ENCODE measurements at regions of chr6 and their contacts with region 1.

Region 1: GRCh38 chr6:33014841-33015634 is 5.6 kb upstream of the HLA-DOA start:
- DNase-seq: peak in 1 of 2 donors; percentile 90
- ATAC-seq: peak; percentile 77 to 85 (median 79)
- H3K4me3 ChIP-seq: no peak overlapping the region
- H3K4me3 Mint-ChIP-seq: no peak overlapping the region
- H3K27ac ChIP-seq: no peak overlapping the region
- H3K27ac Mint-ChIP-seq: no peak overlapping the region
- H3K4me1 ChIP-seq: peaks cover 20% of the 10 kb centered on the region
- H3K4me1 Mint-ChIP-seq: peaks cover 5 to 28% of the 10 kb centered on the region in 2 donors
- H3K27me3 ChIP-seq: no peaks in the 10 kb centered on the region
- H3K27me3 Mint-ChIP-seq: peaks cover 15 to 30% of the 10 kb centered on the region in 2 donors
- CTCF ChIP-seq: peak; percentile 80

Region 2: GRCh38 chr6:32984605-32985389 is 30.2 kb before region 1 on chr6:
- intact Hi-C with region 1: no loop called
- DNase-seq: peak; percentile 85 to 95
- ATAC-seq: peak; percentile 82 to 91 (median 91)
- H3K4me3 ChIP-seq: no peak overlapping the region
- H3K4me3 Mint-ChIP-seq: no peak overlapping the region
- H3K27ac ChIP-seq: no peak overlapping the region
- H3K27ac Mint-ChIP-seq: peak overlapping the region in 1 of 2 donors; percentile 97
- H3K4me1 ChIP-seq: peaks cover 7% of the 10 kb centered on the region
- H3K4me1 Mint-ChIP-seq: peaks cover 20 to 32% of the 10 kb centered on the region in 2 donors
- H3K27me3 ChIP-seq: no peaks in the 10 kb centered on the region
- H3K27me3 Mint-ChIP-seq: no peaks in the 10 kb centered on the region
- CTCF ChIP-seq: peak; percentile 87

Region 3: DNA sequence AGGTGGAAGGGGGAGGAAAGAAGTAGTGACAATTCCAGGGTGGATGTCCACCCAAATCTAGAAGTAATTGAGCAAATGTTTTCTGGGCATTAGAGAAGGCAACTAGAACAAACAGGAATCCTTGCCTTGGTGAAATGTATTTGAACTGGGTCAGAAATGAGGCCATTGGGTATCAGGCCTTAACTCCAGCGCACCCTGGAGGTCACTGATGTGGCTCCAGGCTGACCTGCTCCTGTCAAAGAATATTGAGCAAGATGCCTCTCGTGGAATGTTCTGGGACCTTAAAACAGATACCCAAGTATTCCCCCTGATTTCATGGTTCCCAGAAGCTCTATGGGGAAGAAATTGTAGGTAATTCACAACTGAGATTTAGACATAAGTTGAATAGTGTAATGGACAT is 67.7 kb after region 1 on chr6:
- intact Hi-C with region 1: loop called (anchors 1 kb)
- DNase-seq: peak in 1 of 2 donors; percentile 35
- ATAC-seq: peak; percentile 52 to 75 (median 75)
- H3K4me3 ChIP-seq: no peak overlapping the region
- H3K4me3 Mint-ChIP-seq: no peak overlapping the region
- H3K27ac ChIP-seq: no peak overlapping the region
- H3K27ac Mint-ChIP-seq: no peak overlapping the region
- H3K4me1 ChIP-seq: peaks cover 31% of the 10 kb centered on the region
- H3K4me1 Mint-ChIP-seq: peaks cover 28 to 43% of the 10 kb centered on the region in 2 donors
- H3K27me3 ChIP-seq: no peaks in the 10 kb centered on the region
- H3K27me3 Mint-ChIP-seq: peaks cover 0 to 8% of the 10 kb centered on the region in 2 donors
- CTCF ChIP-seq: peak; percentile 49

Region 4: DNA sequence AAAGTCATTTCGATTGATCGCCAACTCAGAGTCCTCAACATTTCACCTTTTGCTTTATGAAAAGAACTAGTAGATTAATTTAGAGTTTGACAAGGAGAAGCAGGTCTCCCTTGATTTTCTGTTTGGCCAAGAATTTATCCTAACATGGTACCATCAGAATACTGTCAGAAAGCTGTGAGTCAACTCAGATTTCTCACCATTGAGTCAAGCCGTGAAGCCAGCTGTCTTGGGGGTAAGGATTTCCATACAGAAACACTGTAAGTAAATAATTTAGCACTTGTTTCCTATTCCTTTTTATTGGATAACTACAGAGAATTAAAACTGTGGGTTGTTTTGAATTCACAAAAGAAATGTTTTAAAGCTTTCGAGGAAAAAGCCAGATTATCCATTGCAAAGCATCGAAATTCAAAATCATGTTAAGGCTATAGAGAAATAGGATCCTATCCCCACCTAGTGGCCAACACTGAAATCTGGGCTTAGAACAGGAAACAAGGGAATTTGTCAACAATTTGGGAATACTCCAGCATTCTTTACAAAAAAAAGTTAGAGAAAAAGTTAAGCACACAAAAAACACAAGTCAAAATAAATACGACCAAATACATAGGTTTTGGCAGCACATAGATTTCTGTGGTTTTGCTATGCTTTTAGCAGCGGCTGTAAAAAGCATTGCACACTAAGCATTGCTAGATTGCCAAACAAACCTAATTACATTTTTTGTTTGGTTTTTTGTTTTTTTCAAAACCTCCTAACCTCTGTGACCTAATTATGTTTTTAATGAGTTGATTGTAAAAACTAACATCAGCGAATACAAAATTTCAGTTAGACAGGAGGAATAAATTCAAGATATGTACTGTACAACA is 133.0 kb after region 1 on chr6:
- intact Hi-C with region 1: loop called (anchors 5 kb)
- DNase-seq: peak in 1 of 2 donors; percentile 54
- ATAC-seq: no peak
- H3K4me3 ChIP-seq: no peak overlapping the region
- H3K4me3 Mint-ChIP-seq: no peak overlapping the region
- H3K27ac ChIP-seq: no peak overlapping the region
- H3K27ac Mint-ChIP-seq: no peak overlapping the region
- H3K4me1 ChIP-seq: peaks cover 3% of the 10 kb centered on the region
- H3K4me1 Mint-ChIP-seq: peaks cover 2 to 5% of the 10 kb centered on the region in 2 donors
- H3K27me3 ChIP-seq: no peaks in the 10 kb centered on the region
- H3K27me3 Mint-ChIP-seq: peaks cover 12 to 20% of the 10 kb centered on the region in 2 donors
- CTCF ChIP-seq: peak; percentile 54